Activated CD8-positive, alpha-beta T cell treated with anti-CD3 and anti-CD28 coated beads, Interleukin-2, amount 10 ng/mL, durations not matched to agents 7 days and 5 days (primary cell): ENCODE measurements at regions of chr15 and their contacts with region 1.

Region 1: GRCh38 chr15:50182219-50183013 is 420 bp downstream of the SLC27A2 start:
- DNase-seq: peak; percentile 72
- ATAC-seq: peak; percentile 77
- H3K4me3 Mint-ChIP-seq: peak overlapping the region; percentile 91
- H3K27ac Mint-ChIP-seq: peak overlapping the region; percentile 91
- H3K4me1 Mint-ChIP-seq: peaks cover 40% of the 10 kb centered on the region
- H3K27me3 Mint-ChIP-seq: peaks cover 9% of the 10 kb centered on the region

Region 2: GRCh38 chr15:50128266-50128665 is 54.1 kb before region 1 on chr15:
- CTCF ChIA-PET with region 1: no interaction called
- POLR2A ChIA-PET with region 1: no interaction called
- DNase-seq: no peak
- ATAC-seq: no peak
- H3K4me3 Mint-ChIP-seq: no peak overlapping the region
- H3K27ac Mint-ChIP-seq: no peak overlapping the region
- H3K4me1 Mint-ChIP-seq: peaks cover 3% of the 10 kb centered on the region
- H3K27me3 Mint-ChIP-seq: no peaks in the 10 kb centered on the region

Region 3: DNA sequence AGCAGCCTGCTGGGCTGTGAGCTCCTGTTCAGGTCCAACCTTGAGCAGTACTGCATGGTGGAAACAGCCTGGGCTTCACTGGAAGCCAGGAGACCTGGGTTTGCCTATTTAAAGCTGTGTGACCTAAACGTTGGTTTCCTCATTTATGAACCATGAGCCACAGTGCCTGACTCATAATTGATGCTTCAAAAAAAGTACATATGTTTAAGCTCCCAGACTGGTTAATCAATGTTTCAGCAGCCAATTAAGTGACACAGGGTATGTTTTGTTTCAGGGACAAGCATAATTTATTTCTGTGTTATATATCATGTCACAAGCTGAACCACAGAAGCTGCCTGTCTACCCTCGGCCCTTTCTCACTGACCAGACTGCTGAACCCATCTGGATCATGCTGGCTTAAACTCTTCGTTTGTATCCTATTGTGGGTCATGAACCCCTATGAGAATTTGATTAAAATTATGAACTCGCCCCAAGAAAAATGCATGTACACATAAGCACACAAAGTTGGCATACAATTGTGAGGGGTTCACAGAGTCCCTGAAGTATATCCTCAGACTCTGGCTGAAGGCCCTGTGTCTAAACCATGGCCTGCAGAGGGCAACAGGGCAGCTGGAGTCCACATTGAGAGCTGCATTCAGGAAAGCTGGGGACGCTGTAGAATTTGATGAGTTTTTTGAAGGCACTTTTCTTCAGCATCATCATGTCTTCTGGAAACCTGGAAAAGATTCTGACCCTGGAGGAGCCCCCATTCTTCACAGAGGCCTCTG is 59.5 kb after region 1 on chr15:
- CTCF ChIA-PET with region 1: interaction called, 15 read pairs
- POLR2A ChIA-PET with region 1: interaction called, 8 read pairs
- DNase-seq: no peak
- ATAC-seq: peak; percentile 58
- H3K4me3 Mint-ChIP-seq: no peak overlapping the region
- H3K27ac Mint-ChIP-seq: no peak overlapping the region
- H3K4me1 Mint-ChIP-seq: peaks cover 21% of the 10 kb centered on the region
- H3K27me3 Mint-ChIP-seq: no peaks in the 10 kb centered on the region

Region 4: DNA sequence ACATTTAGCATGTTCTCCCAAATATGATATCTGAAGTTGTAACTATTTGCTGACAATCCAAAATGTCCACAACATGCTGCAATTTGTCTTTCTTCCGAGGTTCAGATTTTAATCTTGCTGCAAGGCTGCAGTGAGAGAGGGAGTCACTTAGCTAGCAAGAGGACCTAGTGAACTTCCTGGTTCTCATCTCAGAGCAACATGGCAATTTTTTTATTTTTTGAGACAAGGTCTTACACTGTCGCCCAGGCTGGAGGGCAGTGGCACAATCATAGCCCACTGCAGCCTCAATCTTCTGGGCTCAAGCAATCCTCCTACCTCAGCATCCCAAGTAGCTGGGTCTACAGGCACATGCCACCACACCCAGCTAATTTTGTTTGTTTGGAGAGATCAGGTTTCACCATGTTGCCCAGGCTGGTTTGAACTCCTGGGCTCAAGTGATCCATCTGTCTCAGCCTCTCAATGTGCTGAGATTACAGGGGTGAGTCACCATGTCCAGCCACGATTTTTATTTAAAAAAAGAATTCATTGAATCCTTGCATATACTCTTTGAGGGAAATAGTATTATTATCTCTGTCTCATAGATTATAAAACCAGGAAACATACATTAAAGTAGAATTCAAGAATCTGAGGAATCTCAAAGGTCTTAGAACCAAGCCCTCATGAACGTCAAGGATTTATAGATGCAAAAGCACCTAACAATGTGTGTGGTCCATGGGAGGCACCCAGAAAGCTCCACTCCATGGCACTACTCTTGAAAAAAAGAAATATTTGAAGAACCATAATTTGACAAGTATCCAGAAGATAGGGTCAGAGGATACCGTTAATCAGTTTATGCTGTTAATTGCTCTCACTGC is 74.0 kb after region 1 on chr15:
- CTCF ChIA-PET with region 1: interaction called, 66 read pairs
- POLR2A ChIA-PET with region 1: interaction called, 6 read pairs
- DNase-seq: peak; percentile 12
- ATAC-seq: no peak
- H3K4me3 Mint-ChIP-seq: no peak overlapping the region
- H3K27ac Mint-ChIP-seq: no peak overlapping the region
- H3K4me1 Mint-ChIP-seq: peaks cover 58% of the 10 kb centered on the region
- H3K27me3 Mint-ChIP-seq: no peaks in the 10 kb centered on the region

Region 5: DNA sequence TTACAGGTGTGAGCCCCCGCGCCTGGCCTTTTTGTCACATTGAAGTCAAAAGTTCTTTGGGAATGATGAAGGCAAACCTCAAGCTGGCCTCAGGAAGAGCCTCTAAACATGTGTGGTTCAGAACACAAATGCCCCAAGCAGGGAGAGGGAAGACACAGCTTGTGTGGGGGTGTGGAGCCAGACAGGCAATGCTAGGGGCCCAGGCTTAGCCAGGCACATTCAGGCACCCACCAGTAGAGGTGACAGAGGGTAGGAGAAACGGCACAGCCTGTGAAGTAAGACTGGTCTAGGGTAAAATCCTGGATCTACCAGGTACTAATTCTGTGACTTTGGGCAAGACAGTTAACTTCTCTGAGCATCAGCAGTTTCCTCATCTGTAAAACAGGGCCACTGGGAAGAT is 79.6 kb after region 1 on chr15:
- CTCF ChIA-PET with region 1: interaction called, 66 read pairs
- POLR2A ChIA-PET with region 1: interaction called, 13 read pairs
- DNase-seq: no peak
- ATAC-seq: peak; percentile 45
- H3K4me3 Mint-ChIP-seq: peak overlapping the region; percentile 38
- H3K27ac Mint-ChIP-seq: peak overlapping the region; percentile 78
- H3K4me1 Mint-ChIP-seq: peaks cover 67% of the 10 kb centered on the region
- H3K27me3 Mint-ChIP-seq: peaks cover under 1% of the 10 kb centered on the region